CD4-positive, alpha-beta T cell (primary cell): ENCODE measurements at regions of chr1 and their contacts with region 1.

Region 1: GRCh38 chr1:40849801-40850592 is 12.2 kb downstream of the CITED4 start:
- DNase-seq: peak; percentile 59 to 87 (median 72)
- ATAC-seq: peak; percentile 92
- H3K4me3 ChIP-seq: no peak overlapping the region
- H3K4me3 Mint-ChIP-seq: peak overlapping the region; percentile 30
- H3K27ac ChIP-seq: no peak overlapping the region
- H3K27ac Mint-ChIP-seq: no peak overlapping the region
- H3K4me1 ChIP-seq: peaks cover 7% of the 10 kb centered on the region
- H3K4me1 Mint-ChIP-seq: peaks cover 15% of the 10 kb centered on the region
- H3K27me3 ChIP-seq: no peaks in the 10 kb centered on the region
- H3K27me3 Mint-ChIP-seq: no peaks in the 10 kb centered on the region
- CTCF ChIP-seq: peak; percentile 90

Region 2: GRCh38 chr1:40161125-40161887 is 688.7 kb before region 1 on chr1 and contains the start of gene RLF:
- CTCF ChIA-PET with region 1: no interaction called
- POLR2A ChIA-PET with region 1: no interaction called
- intact Hi-C with region 1: no loop called
- DNase-seq: peak; percentile 88 to 98 (median 93)
- ATAC-seq: peak; percentile 93
- H3K4me3 ChIP-seq: peak within 1 kb of the TSS; percentile 98
- H3K4me3 Mint-ChIP-seq: no peak within 1 kb of the TSS
- H3K27ac ChIP-seq: peak within 1 kb of the TSS; percentile 87 to 99
- H3K27ac Mint-ChIP-seq: no peak within 1 kb of the TSS
- H3K4me1 ChIP-seq: peaks cover 19% of the 10 kb centered on the region
- H3K4me1 Mint-ChIP-seq: peaks cover 8% of the 10 kb centered on the region
- H3K27me3 ChIP-seq: no peaks in the 10 kb centered on the region
- H3K27me3 Mint-ChIP-seq: no peaks in the 10 kb centered on the region
- CTCF ChIP-seq: no peak
- total RNA-seq, gene RLF: 42.7 to 44.8 TPM

Region 3: GRCh38 chr1:40774266-40774998 is 75.6 kb before region 1 on chr1:
- CTCF ChIA-PET with region 1: interaction called, 39 read pairs
- POLR2A ChIA-PET with region 1: interaction called, 5 read pairs
- intact Hi-C with region 1: loop called (anchors 1 kb)
- DNase-seq: peak; percentile 51 to 80 (median 61)
- ATAC-seq: peak; percentile 64
- H3K4me3 ChIP-seq: no peak overlapping the region
- H3K4me3 Mint-ChIP-seq: no peak overlapping the region
- H3K27ac ChIP-seq: no peak overlapping the region
- H3K27ac Mint-ChIP-seq: no peak overlapping the region
- H3K4me1 ChIP-seq: no peaks in the 10 kb centered on the region
- H3K4me1 Mint-ChIP-seq: no peaks in the 10 kb centered on the region
- H3K27me3 ChIP-seq: no peaks in the 10 kb centered on the region
- H3K27me3 Mint-ChIP-seq: no peaks in the 10 kb centered on the region
- CTCF ChIP-seq: peak; percentile 85

Region 4: DNA sequence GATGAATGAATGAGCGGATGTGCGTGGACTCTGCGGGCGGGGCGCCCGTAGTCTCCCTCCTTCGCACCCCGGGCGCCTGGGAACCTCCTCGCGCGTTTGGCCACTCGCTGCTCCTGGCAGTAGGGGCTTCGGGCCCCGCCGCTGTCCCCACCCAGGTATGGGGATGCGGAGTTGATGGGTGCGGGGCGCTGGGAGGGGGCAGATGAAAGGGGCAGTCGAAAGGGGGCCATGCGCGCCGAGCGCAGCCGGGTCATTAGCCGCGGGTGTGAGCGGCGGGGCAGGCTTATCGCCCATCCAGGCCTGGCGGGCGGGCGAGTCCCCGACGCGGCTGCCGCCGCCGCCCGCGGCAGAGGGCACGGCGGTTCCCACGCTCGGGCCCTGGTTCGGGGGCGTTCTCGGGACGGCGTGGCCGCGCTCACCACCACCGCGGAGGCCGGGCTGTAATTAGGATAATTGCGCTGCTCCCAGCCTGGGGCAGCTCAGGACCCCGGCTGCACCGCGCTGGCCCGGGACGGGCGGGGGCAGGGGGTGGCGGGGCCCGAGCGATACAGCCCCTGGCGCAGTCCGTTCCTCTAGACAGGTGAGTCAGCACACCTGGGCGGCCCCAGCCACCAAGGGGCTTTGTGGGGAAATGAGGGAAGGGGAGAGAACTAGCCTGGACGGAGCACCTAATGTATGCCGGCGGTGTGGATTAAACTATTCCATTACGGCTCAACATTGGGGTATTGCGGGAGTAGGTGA is 34.2 kb after region 1 on chr1:
- CTCF ChIA-PET with region 1: no interaction called
- POLR2A ChIA-PET with region 1: no interaction called
- intact Hi-C with region 1: no loop called
- DNase-seq: no peak
- ATAC-seq: peak; percentile 37
- H3K4me3 ChIP-seq: no peak overlapping the region
- H3K4me3 Mint-ChIP-seq: peak overlapping the region; percentile 0
- H3K27ac ChIP-seq: no peak overlapping the region
- H3K27ac Mint-ChIP-seq: no peak overlapping the region
- H3K4me1 ChIP-seq: peaks cover 5% of the 10 kb centered on the region
- H3K4me1 Mint-ChIP-seq: peaks cover 5% of the 10 kb centered on the region
- H3K27me3 ChIP-seq: peaks cover 25 to 45% of the 10 kb centered on the region in 2 experiments
- H3K27me3 Mint-ChIP-seq: peaks cover 67% of the 10 kb centered on the region
- CTCF ChIP-seq: no peak

Region 5: DNA sequence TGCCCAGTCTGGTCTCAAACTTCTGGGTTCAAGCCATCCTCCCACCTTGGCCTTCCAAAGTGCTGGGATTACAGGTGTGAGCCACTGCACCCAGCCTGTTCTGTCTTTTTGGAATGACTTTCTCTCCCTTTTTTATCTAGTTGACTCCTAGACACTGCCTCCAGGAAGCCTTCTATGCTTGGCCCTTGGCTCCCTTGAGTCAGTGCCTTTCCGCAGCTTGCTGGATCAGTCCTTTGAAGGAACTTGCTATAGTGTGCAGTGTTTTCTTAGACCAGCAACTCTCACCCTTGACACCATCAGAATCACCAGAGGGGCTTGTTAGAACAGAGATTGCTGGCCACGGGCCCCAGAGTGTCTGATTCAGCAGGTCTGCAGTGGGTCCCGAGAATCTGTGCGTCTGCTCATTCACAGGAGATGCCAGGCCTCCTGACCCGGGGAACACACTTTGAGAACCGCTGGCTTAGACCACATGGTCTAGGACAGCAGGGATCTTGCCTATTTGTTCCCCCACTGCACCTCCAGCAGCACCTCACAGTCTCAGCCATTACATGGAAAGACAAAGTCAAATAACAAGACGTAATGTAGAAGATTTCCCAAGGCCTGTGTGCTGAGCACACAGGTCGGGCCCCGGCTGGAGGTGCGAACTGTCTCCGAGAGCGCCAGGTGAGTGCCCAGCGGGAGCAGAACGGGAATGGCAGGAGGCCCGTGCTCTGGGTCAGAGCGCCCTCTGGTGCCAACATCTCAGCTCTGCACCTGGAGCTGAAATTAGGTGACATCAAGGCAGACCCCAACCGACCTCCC is 102.1 kb after region 1 on chr1:
- CTCF ChIA-PET with region 1: interaction called, 5 read pairs
- POLR2A ChIA-PET with region 1: no interaction called
- intact Hi-C with region 1: loop called in 1 of 2 experiments (anchors 2 kb)
- DNase-seq: peak; percentile 35 to 75 (median 46)
- ATAC-seq: peak; percentile 54
- H3K4me3 ChIP-seq: no peak overlapping the region
- H3K4me3 Mint-ChIP-seq: no peak overlapping the region
- H3K27ac ChIP-seq: no peak overlapping the region
- H3K27ac Mint-ChIP-seq: no peak overlapping the region
- H3K4me1 ChIP-seq: peaks cover 7% of the 10 kb centered on the region
- H3K4me1 Mint-ChIP-seq: no peaks in the 10 kb centered on the region
- H3K27me3 ChIP-seq: peaks cover 3 to 11% of the 10 kb centered on the region in 2 experiments
- H3K27me3 Mint-ChIP-seq: peaks cover 41% of the 10 kb centered on the region
- CTCF ChIP-seq: peak; percentile 93

Region 6: GRCh38 chr1:40984066-40984465 is 134.1 kb after region 1 on chr1:
- CTCF ChIA-PET with region 1: no interaction called
- POLR2A ChIA-PET with region 1: no interaction called
- intact Hi-C with region 1: no loop called
- DNase-seq: no peak
- ATAC-seq: no peak
- H3K4me3 ChIP-seq: no peak overlapping the region
- H3K4me3 Mint-ChIP-seq: no peak overlapping the region
- H3K27ac ChIP-seq: no peak overlapping the region
- H3K27ac Mint-ChIP-seq: no peak overlapping the region
- H3K4me1 ChIP-seq: peaks cover 20% of the 10 kb centered on the region
- H3K4me1 Mint-ChIP-seq: peaks cover 14% of the 10 kb centered on the region
- H3K27me3 ChIP-seq: no peaks in the 10 kb centered on the region
- H3K27me3 Mint-ChIP-seq: no peaks in the 10 kb centered on the region
- CTCF ChIP-seq: no peak